Activated CD8-positive, alpha-beta T cell treated with anti-CD3 and anti-CD28 coated beads for 36 hours (primary cell): ENCODE measurements at regions of chr10 and their contacts with region 1.

Region 1: GRCh38 chr10:97676770-97677581 is 10.1 kb downstream of the AVPI1 start:
- DNase-seq: peak; percentile 58
- ATAC-seq: peak; percentile 87
- H3K4me3 Mint-ChIP-seq: no peak overlapping the region
- H3K27ac Mint-ChIP-seq: no peak overlapping the region
- H3K4me1 Mint-ChIP-seq: peaks cover 9% of the 10 kb centered on the region
- H3K27me3 Mint-ChIP-seq: no peaks in the 10 kb centered on the region
- CTCF ChIP-seq: peak; percentile 90

Region 2: GRCh38 chr10:97596101-97597062 is 80.6 kb before region 1 on chr10:
- CTCF ChIA-PET with region 1: no interaction called
- POLR2A ChIA-PET with region 1: no interaction called
- intact Hi-C with region 1: no loop called
- DNase-seq: no peak
- ATAC-seq: no peak
- H3K4me3 Mint-ChIP-seq: no peak overlapping the region
- H3K27ac Mint-ChIP-seq: no peak overlapping the region
- H3K4me1 Mint-ChIP-seq: no peaks in the 10 kb centered on the region
- H3K27me3 Mint-ChIP-seq: no peaks in the 10 kb centered on the region
- CTCF ChIP-seq: no peak

Region 3: DNA sequence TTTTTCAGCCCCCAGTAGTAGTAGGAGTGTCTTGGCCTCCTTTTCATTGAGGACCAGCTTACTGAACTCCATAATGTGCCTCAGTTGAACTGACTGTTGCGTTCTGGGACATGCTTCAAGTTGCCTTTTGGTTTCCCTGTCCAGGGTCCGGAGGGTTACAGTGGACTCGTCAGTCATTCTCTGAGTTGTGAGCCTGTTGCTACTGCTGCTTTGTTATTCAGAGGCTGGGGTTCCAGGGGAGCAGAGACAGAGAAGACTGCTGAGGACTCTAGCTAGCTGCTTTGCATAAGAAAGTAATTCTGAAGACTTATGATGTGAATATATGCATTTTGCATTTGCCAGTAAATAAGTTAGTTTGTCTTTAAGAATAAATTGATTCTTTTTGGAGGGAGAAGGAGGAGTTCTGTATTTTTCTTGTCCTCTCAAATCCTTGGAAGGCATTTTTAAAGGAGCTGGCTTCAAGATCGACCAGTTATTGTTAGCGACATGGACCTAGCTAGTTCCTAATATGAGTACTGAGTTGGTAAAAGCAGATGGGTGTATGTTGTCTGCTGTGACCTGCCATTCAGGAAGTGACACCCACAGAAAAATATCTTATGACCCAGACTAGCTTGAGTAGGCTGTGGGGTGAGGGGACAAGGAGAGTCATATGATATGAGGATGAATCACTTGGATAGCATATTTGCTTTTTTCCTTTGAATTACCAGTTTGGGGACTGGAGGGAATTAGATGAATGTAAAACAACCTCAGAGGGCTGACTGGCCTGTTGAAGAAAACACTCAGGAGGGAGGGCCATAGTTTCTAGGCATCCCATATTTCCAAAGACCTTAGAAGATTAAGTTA is 28.2 kb before region 1 on chr10:
- CTCF ChIA-PET with region 1: interaction called, 10 read pairs
- POLR2A ChIA-PET with region 1: no interaction called
- intact Hi-C with region 1: no loop called
- DNase-seq: peak; percentile 60
- ATAC-seq: peak; percentile 99
- H3K4me3 Mint-ChIP-seq: no peak overlapping the region
- H3K27ac Mint-ChIP-seq: peak overlapping the region; percentile 73
- H3K4me1 Mint-ChIP-seq: peaks cover 19% of the 10 kb centered on the region
- H3K27me3 Mint-ChIP-seq: no peaks in the 10 kb centered on the region
- CTCF ChIP-seq: no peak

Region 4: GRCh38 chr10:97659589-97659988 is 17.4 kb before region 1 on chr10:
- CTCF ChIA-PET with region 1: interaction called, 19 read pairs
- POLR2A ChIA-PET with region 1: no interaction called
- intact Hi-C with region 1: no loop called
- DNase-seq: no peak
- ATAC-seq: no peak
- H3K4me3 Mint-ChIP-seq: no peak overlapping the region
- H3K27ac Mint-ChIP-seq: no peak overlapping the region
- H3K4me1 Mint-ChIP-seq: no peaks in the 10 kb centered on the region
- H3K27me3 Mint-ChIP-seq: no peaks in the 10 kb centered on the region
- CTCF ChIP-seq: no peak

Region 5: GRCh38 chr10:97701438-97702069 is 24.6 kb after region 1 on chr10:
- CTCF ChIA-PET with region 1: interaction called, 38 read pairs
- POLR2A ChIA-PET with region 1: interaction called, 3 read pairs
- intact Hi-C with region 1: no loop called
- DNase-seq: peak; percentile 61
- ATAC-seq: peak; percentile 99
- H3K4me3 Mint-ChIP-seq: no peak overlapping the region
- H3K27ac Mint-ChIP-seq: no peak overlapping the region
- H3K4me1 Mint-ChIP-seq: no peaks in the 10 kb centered on the region
- H3K27me3 Mint-ChIP-seq: no peaks in the 10 kb centered on the region
- CTCF ChIP-seq: peak; percentile 89

Region 6: DNA sequence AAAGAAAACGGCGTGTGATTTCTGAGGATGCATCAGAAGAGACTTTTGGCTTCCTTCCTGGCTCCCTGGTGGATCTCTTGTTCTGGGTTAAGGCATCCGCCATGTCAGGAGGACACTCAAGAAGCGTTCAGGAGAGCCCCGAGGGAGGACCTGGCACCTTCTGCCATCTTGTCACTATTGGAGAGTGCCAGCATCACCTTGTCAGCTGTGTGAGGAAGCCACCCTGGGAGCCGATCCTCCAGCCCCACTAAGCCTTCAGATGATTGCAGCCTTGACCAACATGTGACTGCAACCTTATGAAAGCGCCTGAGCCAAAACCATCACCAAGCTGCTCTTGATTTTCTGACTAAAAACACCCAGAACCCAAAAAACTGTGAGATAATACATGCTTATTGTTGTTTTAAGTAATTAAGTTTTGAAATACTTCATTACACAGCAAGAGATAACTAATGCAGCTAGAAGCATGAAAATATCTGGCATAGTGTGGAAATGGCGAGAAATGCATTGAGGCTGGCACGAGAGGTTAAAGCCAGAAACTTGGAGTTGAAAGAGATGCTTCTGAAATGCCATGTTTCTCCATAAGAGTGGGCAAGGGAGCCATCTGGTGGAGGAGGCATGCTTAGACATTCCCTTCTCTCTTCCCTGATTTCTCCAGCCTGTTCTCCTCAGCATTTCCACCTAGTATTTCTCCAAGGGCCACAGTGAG is 54.5 kb after region 1 on chr10:
- CTCF ChIA-PET with region 1: interaction called, 35 read pairs
- POLR2A ChIA-PET with region 1: interaction called, 3 read pairs
- intact Hi-C with region 1: loop called (anchors 2 kb)
- DNase-seq: peak; percentile 69
- ATAC-seq: peak; percentile 58
- H3K4me3 Mint-ChIP-seq: no peak overlapping the region
- H3K27ac Mint-ChIP-seq: no peak overlapping the region
- H3K4me1 Mint-ChIP-seq: peaks cover 6% of the 10 kb centered on the region
- H3K27me3 Mint-ChIP-seq: peaks cover 3% of the 10 kb centered on the region
- CTCF ChIP-seq: peak; percentile 86

Region 7: GRCh38 chr10:97736902-97737769 is 60.2 kb after region 1 on chr10 and contains the start of gene ZFYVE27:
- CTCF ChIA-PET with region 1: interaction called, 35 read pairs
- POLR2A ChIA-PET with region 1: interaction called, 3 read pairs
- intact Hi-C with region 1: no loop called
- DNase-seq: peak; percentile 98
- ATAC-seq: peak; percentile 95
- H3K4me3 Mint-ChIP-seq: peak within 1 kb of the TSS; percentile 85
- H3K27ac Mint-ChIP-seq: peak within 1 kb of the TSS; percentile 93
- H3K4me1 Mint-ChIP-seq: peaks cover 47% of the 10 kb centered on the region
- H3K27me3 Mint-ChIP-seq: no peaks in the 10 kb centered on the region
- CTCF ChIP-seq: no peak
- total RNA-seq, gene ZFYVE27: 18.1 to 20.1 TPM